ENCODE measurements at regions of chr13 and their contacts with region 1.

Region 1: GRCh38 chr13:30963791-30964190 is 31.3 kb downstream of the TEX26 start:
- DNase-seq: no peak
- H3K4me3 Mint-ChIP-seq: no peak overlapping the region
- H3K27ac Mint-ChIP-seq: no peak overlapping the region
- H3K4me1 Mint-ChIP-seq: no peaks in the 10 kb centered on the region
- H3K27me3 Mint-ChIP-seq: peaks cover 55% of the 10 kb centered on the region

Region 2: GRCh38 chr13:30465585-30466357 is 498.0 kb before region 1 on chr13 and contains the start of gene HMGB1:
- CTCF ChIA-PET with region 1: no interaction called
- POLR2A ChIA-PET with region 1: interaction called, 10 read pairs
- DNase-seq: peak; percentile 99
- H3K4me3 Mint-ChIP-seq: peak within 1 kb of the TSS; percentile 84
- H3K27ac Mint-ChIP-seq: peak within 1 kb of the TSS; percentile 99
- H3K4me1 Mint-ChIP-seq: peaks cover 34% of the 10 kb centered on the region
- H3K27me3 Mint-ChIP-seq: no peaks in the 10 kb centered on the region
- total RNA-seq, gene HMGB1: 709 to 827 TPM

Measured in activated CD4-positive, alpha-beta T cell treated with anti-CD3 and anti-CD28 coated beads, Interleukin-2, amount 10 ng/mL, durations not matched to agents 7 days and 5 days (primary cell).